HepG2 (cell line): ENCODE measurements at regions of chr3 and their contacts with region 1.

Region 1: GRCh38 chr3:126245811-126246727 is 65.7 kb upstream of the ALDH1L1 start:
- DNase-seq: peak; percentile 48
- ATAC-seq: peak; percentile 98
- H3K4me3 ChIP-seq: peak overlapping the region in 1 of 3 experiments; percentile 4; a peak in 1 of 6 replicates
- H3K27ac ChIP-seq: no peak overlapping the region
- H3K4me1 ChIP-seq: peaks cover 6% of the 10 kb centered on the region; the same call in 1 of the 2 replicates
- H3K27me3 ChIP-seq: peaks cover 0 to 3% of the 10 kb centered on the region in 2 experiments; a peak in 1 of 5 replicates
- CTCF ChIP-seq: peak; percentile 77
- EP300 ChIP-seq: no peak
- POLR2A ChIP-seq: no peak
- RAD21 ChIP-seq: 0 out of 2 replicates have a peak, but pooled peaks have one; percentile 19

Region 2: DNA sequence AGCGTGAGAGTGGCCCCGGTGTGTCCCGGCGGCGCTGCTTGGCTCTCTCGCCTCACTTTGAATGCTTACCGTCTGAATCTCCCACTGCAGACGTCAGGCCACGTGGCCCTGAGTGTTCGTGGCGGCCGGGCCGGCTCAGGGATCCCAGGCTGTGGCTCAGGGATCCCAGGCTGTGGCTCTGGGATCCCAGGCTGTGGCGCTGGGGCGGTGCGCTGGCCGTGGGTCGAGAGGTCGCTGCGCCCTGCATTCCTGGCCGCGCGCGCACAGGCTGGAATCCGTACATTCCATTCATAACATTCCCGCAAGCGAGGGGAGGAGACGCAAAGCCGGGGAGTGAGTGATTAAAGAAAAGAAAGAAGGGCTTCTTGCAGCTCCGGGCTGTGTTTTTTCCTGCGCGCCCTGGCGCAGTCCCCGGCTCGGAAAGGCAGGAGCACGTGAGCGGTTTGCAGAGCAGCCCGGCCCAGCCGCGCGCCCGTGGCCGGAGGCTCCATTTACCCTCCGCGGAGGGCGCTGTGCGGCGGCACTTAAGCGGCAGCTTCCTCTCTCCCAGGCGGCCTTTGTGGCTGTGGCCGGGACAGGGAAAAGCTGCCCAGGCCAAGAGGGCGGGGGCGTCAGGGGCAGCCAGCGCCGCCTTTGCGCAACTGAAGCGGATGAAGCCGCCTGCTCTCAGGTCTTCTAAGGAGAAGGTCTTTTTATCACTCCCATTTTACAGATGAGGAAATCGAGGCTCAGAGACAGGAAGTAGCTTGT is 21.3 kb after region 1 on chr3:
- CTCF ChIA-PET with region 1: no interaction called
- POLR2A ChIA-PET with region 1: no interaction called
- in situ Hi-C with region 1: no loop called
- intact Hi-C with region 1: no loop called
- DNase-seq: peak; percentile 88
- ATAC-seq: peak; percentile 90
- H3K4me3 ChIP-seq: peak overlapping the region; percentile 48 to 67 (median 57); a peak in 5 of 6 replicates
- H3K27ac ChIP-seq: peak overlapping the region; percentile 78
- H3K4me1 ChIP-seq: peaks cover 52% of the 10 kb centered on the region
- H3K27me3 ChIP-seq: peaks cover 0 to 2% of the 10 kb centered on the region in 2 experiments; a peak in 1 of 5 replicates
- CTCF ChIP-seq: peak; percentile 71
- EP300 ChIP-seq: no peak
- POLR2A ChIP-seq: peak in 1 of 2 experiments; percentile 52; a peak in 2 of 4 replicates
- RAD21 ChIP-seq: no peak; the same call in 1 of the 2 replicates

Region 3: DNA sequence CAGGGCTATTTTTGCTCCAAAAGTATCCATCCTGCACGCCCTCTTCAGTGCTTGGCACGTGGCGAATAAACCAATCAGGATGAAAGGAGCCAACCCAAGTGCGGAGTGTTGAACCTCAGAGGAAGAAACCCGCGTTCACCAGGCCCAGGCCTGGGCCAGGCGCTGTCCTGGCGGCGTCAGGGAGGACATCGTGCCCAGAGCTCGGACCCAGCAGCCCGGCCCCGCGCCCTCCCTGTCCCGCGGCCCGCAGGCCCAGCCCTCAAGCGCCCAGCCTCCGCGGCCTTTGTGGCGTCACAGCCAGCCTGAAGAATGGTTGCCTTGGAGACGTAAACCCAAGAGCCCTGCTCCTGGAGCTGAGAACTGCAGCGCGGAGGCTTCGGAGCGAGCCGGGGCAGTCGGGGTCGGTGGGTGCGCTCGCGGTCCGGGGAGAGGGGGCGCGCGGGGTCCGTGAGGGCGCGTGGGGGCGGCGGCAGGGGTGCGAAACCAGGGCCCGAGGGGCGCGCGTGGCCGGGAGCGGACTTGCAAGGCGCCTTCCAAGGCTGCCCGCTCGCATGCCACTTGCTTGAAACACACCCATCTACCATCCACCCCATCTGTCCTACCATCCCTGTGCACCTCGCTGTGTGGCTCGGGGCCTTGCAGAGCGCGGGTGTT is 148.6 kb after region 1 on chr3 and contains the start of gene CFAP100:
- CTCF ChIA-PET with region 1: interaction called, 42 read pairs
- POLR2A ChIA-PET with region 1: no interaction called
- in situ Hi-C with region 1: loop called (anchors 5 kb)
- intact Hi-C with region 1: no loop called
- DNase-seq: no peak
- ATAC-seq: no peak
- H3K4me3 ChIP-seq: no peak within 1 kb of the TSS
- H3K27ac ChIP-seq: no peak within 1 kb of the TSS
- H3K4me1 ChIP-seq: peaks cover 2% of the 10 kb centered on the region
- H3K27me3 ChIP-seq: peaks cover 2 to 37% of the 10 kb centered on the region in 2 experiments; a peak in 3 of 5 replicates
- CTCF ChIP-seq: no peak
- EP300 ChIP-seq: no peak
- POLR2A ChIP-seq: no peak
- RAD21 ChIP-seq: no peak
- total RNA-seq, gene CFAP100: 0.36 TPM in 1 of 2 replicates, not detected in the other